ENCODE measurements at regions of chr16 and their contacts with region 1.

Region 1: GRCh38 chr16:85759631-85760419 is 8.9 kb upstream of the C16orf74 start:
- DNase-seq: no peak
- ATAC-seq: peak; percentile 62
- H3K4me3 ChIP-seq: no peak overlapping the region
- H3K27ac ChIP-seq: no peak overlapping the region
- H3K4me1 ChIP-seq: peaks cover 46% of the 10 kb centered on the region
- H3K27me3 ChIP-seq: no peaks in the 10 kb centered on the region
- CTCF ChIP-seq: peak; percentile 68 to 90 (median 83)
- EP300 ChIP-seq: no peak
- POLR2A ChIP-seq: no peak
- RAD21 ChIP-seq: peak; percentile 78

Region 2: DNA sequence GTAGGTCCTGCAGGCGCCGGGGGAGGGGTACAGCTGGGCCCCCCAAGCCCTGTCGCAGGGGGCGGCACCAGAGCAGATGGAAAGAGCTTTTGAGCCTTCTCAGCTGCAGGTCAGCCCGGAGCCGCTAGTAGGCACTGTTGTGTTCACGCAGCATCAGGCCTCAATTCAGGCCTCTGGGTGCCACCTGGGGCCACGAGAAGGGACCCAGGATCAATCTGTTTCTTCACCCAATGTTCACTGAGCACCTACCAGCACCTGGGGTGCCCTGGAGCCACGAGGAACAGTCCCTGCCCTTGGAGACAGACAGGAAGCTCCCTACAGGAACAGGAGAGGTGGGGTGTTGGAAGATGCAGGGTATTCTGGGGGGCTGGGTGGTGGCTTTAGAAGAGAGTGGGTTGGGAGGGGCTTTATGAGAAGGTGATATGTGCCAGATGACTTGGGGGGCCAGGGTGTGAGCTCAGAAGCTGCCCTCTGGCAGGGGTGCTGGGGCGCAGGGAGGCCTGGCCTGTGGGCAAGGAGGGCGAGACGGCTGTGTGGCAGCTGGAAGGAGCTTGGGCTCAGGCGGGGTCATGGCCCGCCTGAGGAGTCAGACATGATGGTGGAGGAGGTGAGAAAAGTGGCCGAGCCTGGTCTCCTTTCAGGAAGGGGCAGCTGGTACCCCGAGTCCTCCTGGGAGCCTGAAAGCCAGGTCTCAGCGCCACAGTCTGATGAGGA is 268.6 kb before region 1 on chr16:
- CTCF ChIA-PET with region 1: no interaction called
- POLR2A ChIA-PET with region 1: no interaction called
- RAD21 ChIA-PET with region 1: no interaction called
- SMC1A ChIA-PET with region 1: no interaction called
- in situ Hi-C with region 1: no loop called
- intact Hi-C with region 1: no loop called
- DNase-seq: no peak
- ATAC-seq: peak; percentile 86
- H3K4me3 ChIP-seq: no peak overlapping the region
- H3K27ac ChIP-seq: no peak overlapping the region
- H3K4me1 ChIP-seq: peaks cover 3% of the 10 kb centered on the region; the same call in 1 of the 2 replicates
- H3K27me3 ChIP-seq: peaks cover 0 to 2% of the 10 kb centered on the region in 2 experiments; a peak in 1 of 4 replicates
- CTCF ChIP-seq: peak; percentile 72 to 98 (median 98)
- EP300 ChIP-seq: no peak
- POLR2A ChIP-seq: no peak
- RAD21 ChIP-seq: peak; percentile 67

Region 3: DNA sequence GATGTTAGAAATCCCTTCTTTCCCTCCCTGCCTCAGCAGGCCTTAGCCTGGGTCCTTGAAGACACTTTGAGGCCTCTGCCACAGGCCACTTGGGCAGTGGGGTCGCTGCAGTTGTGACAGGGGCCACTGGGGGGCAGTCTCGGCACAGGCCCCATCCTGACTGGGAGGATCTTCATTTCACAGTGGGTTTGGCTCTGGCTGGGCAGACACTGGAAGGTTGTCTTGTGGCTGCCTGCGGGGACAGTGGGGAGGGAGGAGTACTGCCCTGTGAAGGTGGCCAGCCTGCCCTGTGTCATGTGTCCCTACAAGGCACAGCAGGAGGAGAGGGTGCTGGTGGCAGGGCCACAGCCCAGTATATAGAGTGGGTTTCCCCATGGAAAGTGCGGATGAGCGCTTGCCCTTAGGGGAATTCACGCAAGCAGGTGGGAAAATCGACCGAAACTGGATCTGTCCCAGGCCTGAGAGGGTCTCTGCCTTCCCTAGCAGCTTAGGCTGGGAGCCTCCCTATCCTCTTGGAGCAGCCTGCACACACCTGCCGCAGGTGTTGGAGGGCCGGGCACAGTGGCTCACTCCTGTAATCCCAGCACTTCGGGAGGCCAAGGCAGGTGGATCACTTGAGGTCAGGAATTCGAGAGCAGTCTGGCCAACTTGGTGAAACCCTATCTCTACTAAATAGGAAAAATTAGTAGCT is 99.9 kb before region 1 on chr16:
- CTCF ChIA-PET with region 1: interaction called, 4 read pairs
- POLR2A ChIA-PET with region 1: no interaction called
- RAD21 ChIA-PET with region 1: no interaction called
- SMC1A ChIA-PET with region 1: no interaction called
- in situ Hi-C with region 1: no loop called
- intact Hi-C with region 1: loop called (anchors 2 kb)
- DNase-seq: no peak
- ATAC-seq: peak; percentile 94
- H3K4me3 ChIP-seq: no peak overlapping the region
- H3K27ac ChIP-seq: no peak overlapping the region
- H3K4me1 ChIP-seq: no peaks in the 10 kb centered on the region
- H3K27me3 ChIP-seq: no peaks in the 10 kb centered on the region
- CTCF ChIP-seq: peak; percentile 87 to 96 (median 95)
- EP300 ChIP-seq: no peak
- POLR2A ChIP-seq: no peak; the same call in 1 of the 2 replicates
- RAD21 ChIP-seq: peak; percentile 80

Region 4: DNA sequence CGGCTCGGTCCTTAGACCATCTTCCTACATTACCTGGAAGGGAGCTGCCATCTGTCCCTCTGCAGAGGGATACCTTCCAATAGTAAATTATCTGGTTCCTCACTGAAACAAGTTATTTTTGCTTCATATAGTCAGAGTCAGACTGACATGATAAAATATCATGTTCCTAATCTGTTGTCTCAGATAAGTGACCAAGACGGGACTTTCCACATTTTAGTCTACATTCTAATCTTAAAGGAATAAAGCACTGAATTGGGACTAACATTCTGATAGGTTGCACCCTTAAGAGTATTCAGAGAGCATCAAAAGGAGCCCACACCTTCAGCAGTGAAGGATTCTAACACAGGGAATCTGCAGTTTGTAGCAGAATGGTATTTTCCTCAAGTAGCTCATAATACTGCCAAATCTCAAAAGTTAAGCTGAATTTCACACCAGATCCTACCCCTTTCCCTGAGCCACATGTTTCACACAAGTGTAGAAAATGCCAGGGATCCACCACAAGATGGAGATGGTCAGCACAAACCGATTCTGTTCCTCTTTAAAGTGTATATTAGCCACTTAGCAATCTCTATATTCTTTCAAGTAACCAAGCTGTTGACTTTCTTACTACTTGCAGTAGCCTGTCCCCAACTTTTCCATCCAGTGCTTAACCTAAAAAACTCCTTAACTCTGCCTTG is 84.4 kb before region 1 on chr16:
- CTCF ChIA-PET with region 1: interaction called, 5 read pairs
- POLR2A ChIA-PET with region 1: no interaction called
- RAD21 ChIA-PET with region 1: no interaction called
- SMC1A ChIA-PET with region 1: interaction called, 11 read pairs
- in situ Hi-C with region 1: no loop called
- intact Hi-C with region 1: no loop called
- DNase-seq: no peak
- ATAC-seq: peak; percentile 43
- H3K4me3 ChIP-seq: no peak overlapping the region
- H3K27ac ChIP-seq: peak overlapping the region; percentile 28; the same call in 1 of the 2 replicates
- H3K4me1 ChIP-seq: peaks cover 16% of the 10 kb centered on the region
- H3K27me3 ChIP-seq: no peaks in the 10 kb centered on the region
- CTCF ChIP-seq: peak; percentile 23 to 43 (median 35); a peak in 3 of 6 replicates
- EP300 ChIP-seq: no peak
- POLR2A ChIP-seq: no peak
- RAD21 ChIP-seq: 0 out of 2 replicates have a peak, but pooled peaks have one; percentile 16

Region 5: DNA sequence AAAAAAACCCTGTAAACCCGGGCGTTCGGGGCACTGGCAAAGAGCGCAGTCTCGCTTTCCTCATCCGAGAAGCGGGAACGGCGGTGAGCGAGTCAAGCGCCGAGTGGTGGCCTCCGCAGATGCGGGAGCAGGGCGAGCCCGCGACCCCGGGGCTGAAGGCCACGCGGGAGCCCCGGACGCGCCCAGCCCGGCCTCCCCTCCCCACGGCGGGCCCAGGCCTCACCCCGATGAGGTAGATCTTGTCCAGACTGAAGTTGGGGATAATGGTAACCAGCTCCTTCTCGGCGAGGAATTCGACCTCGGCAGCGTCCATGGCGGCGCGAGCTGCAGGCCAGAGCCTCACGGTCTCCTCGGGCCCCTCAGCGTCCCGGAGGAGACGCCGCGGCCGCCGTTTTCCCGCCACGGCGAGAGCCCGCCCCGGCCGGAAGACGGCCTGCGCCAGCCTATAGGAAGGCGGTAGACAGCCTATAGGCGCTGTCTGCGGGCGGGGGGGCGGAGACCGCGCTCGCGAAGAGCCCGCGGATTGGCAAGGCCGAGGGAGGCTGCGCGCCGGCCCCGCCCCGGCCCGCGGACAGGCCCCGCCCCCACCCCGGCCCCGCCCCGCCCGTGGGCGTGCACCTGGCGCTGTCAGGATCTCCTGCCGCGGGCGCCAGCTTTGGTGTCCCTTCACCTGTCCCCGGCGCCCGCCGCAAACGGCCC is 71.1 kb before region 1 on chr16 and contains the start of gene GINS2:
- CTCF ChIA-PET with region 1: interaction called, 4 read pairs
- POLR2A ChIA-PET with region 1: no interaction called
- RAD21 ChIA-PET with region 1: no interaction called
- SMC1A ChIA-PET with region 1: interaction called, 5 read pairs
- in situ Hi-C with region 1: no loop called
- intact Hi-C with region 1: loop called (anchors 5 kb)
- DNase-seq: peak; percentile 44
- ATAC-seq: peak; percentile 96
- H3K4me3 ChIP-seq: peak within 1 kb of the TSS; percentile 81
- H3K27ac ChIP-seq: peak within 1 kb of the TSS; percentile 69
- H3K4me1 ChIP-seq: peaks cover 23% of the 10 kb centered on the region
- H3K27me3 ChIP-seq: no peaks in the 10 kb centered on the region
- CTCF ChIP-seq: no peak
- EP300 ChIP-seq: no peak
- POLR2A ChIP-seq: peak; percentile 84
- RAD21 ChIP-seq: no peak
- polyA plus RNA-seq, gene GINS2: 69.4 to 90.8 TPM

Region 6: GRCh38 chr16:85717393-85718121 is 42.3 kb before region 1 on chr16:
- CTCF ChIA-PET with region 1: interaction called, 29 read pairs
- POLR2A ChIA-PET with region 1: no interaction called
- RAD21 ChIA-PET with region 1: interaction called, 3 read pairs
- SMC1A ChIA-PET with region 1: interaction called, 4 read pairs
- in situ Hi-C with region 1: no loop called
- intact Hi-C with region 1: loop called (anchors 5 kb)
- DNase-seq: no peak
- ATAC-seq: peak; percentile 78
- H3K4me3 ChIP-seq: no peak overlapping the region
- H3K27ac ChIP-seq: no peak overlapping the region
- H3K4me1 ChIP-seq: no peaks in the 10 kb centered on the region
- H3K27me3 ChIP-seq: no peaks in the 10 kb centered on the region
- CTCF ChIP-seq: peak; percentile 57 to 65 (median 64)
- EP300 ChIP-seq: no peak
- POLR2A ChIP-seq: no peak
- RAD21 ChIP-seq: peak; percentile 77

Region 7: DNA sequence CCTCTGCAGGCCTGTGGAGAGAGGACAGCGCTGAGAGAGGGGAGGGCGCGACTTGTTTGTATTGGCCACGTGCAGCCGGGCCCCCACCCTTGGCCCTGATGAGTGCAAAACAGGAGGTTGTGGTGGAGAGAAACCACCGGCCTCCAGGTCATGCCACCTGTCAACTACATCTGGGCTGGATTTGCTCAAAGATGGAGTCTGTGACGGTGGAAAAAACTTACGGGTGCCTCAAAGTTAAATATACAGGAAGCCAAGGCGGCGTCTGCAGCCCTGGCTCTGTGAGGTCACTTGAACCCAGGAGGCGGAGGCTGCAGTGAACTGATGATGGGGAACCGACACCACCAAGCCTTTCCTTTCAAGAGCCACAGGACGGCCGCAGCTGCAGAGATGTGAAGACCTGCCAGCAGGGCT is 24.6 kb before region 1 on chr16:
- CTCF ChIA-PET with region 1: interaction called, 9 read pairs
- POLR2A ChIA-PET with region 1: interaction called, 3 read pairs
- RAD21 ChIA-PET with region 1: interaction called, 4 read pairs
- SMC1A ChIA-PET with region 1: interaction called, 3 read pairs
- in situ Hi-C with region 1: no loop called
- intact Hi-C with region 1: loop called (anchors 2 kb)
- DNase-seq: peak; percentile 43
- ATAC-seq: peak; percentile 95
- H3K4me3 ChIP-seq: no peak overlapping the region; the same call in 1 of the 2 replicates
- H3K27ac ChIP-seq: no peak overlapping the region
- H3K4me1 ChIP-seq: peaks cover 15% of the 10 kb centered on the region
- H3K27me3 ChIP-seq: no peaks in the 10 kb centered on the region
- CTCF ChIP-seq: no peak
- EP300 ChIP-seq: no peak
- POLR2A ChIP-seq: no peak
- RAD21 ChIP-seq: no peak

Region 8: GRCh38 chr16:85777583-85778298 is 17.9 kb after region 1 on chr16:
- CTCF ChIA-PET with region 1: no interaction called
- POLR2A ChIA-PET with region 1: no interaction called
- RAD21 ChIA-PET with region 1: no interaction called
- SMC1A ChIA-PET with region 1: no interaction called
- in situ Hi-C with region 1: no loop called
- intact Hi-C with region 1: no loop called
- DNase-seq: no peak
- ATAC-seq: no peak
- H3K4me3 ChIP-seq: no peak overlapping the region
- H3K27ac ChIP-seq: no peak overlapping the region
- H3K4me1 ChIP-seq: no peaks in the 10 kb centered on the region
- H3K27me3 ChIP-seq: no peaks in the 10 kb centered on the region
- CTCF ChIP-seq: no peak
- EP300 ChIP-seq: no peak
- POLR2A ChIP-seq: no peak
- RAD21 ChIP-seq: no peak

Region 9: GRCh38 chr16:85799497-85800337 is 39.9 kb after region 1 on chr16 and contains the starts of genes COX4I1 and EMC8:
- CTCF ChIA-PET with region 1: no interaction called
- POLR2A ChIA-PET with region 1: interaction called, 3 read pairs
- RAD21 ChIA-PET with region 1: no interaction called
- SMC1A ChIA-PET with region 1: no interaction called
- in situ Hi-C with region 1: no loop called
- intact Hi-C with region 1: loop called (anchors 2 kb)
- DNase-seq: peak; percentile 63
- ATAC-seq: peak; percentile 95
- H3K4me3 ChIP-seq: peak within 1 kb of the TSS; percentile 95
- H3K27ac ChIP-seq: peak within 1 kb of the TSS; percentile 94
- H3K4me1 ChIP-seq: peaks cover 11% of the 10 kb centered on the region
- H3K27me3 ChIP-seq: no peaks in the 10 kb centered on the region
- CTCF ChIP-seq: no peak
- EP300 ChIP-seq: peak in 1 of 2 experiments; percentile 41; a peak in 1 of 4 replicates
- POLR2A ChIP-seq: peak; percentile 98
- RAD21 ChIP-seq: no peak
- polyA plus RNA-seq, gene COX4I1: 1,747 to 1,889 TPM
- polyA plus RNA-seq, gene EMC8: 7.8 to 16.5 TPM

Region 10: DNA sequence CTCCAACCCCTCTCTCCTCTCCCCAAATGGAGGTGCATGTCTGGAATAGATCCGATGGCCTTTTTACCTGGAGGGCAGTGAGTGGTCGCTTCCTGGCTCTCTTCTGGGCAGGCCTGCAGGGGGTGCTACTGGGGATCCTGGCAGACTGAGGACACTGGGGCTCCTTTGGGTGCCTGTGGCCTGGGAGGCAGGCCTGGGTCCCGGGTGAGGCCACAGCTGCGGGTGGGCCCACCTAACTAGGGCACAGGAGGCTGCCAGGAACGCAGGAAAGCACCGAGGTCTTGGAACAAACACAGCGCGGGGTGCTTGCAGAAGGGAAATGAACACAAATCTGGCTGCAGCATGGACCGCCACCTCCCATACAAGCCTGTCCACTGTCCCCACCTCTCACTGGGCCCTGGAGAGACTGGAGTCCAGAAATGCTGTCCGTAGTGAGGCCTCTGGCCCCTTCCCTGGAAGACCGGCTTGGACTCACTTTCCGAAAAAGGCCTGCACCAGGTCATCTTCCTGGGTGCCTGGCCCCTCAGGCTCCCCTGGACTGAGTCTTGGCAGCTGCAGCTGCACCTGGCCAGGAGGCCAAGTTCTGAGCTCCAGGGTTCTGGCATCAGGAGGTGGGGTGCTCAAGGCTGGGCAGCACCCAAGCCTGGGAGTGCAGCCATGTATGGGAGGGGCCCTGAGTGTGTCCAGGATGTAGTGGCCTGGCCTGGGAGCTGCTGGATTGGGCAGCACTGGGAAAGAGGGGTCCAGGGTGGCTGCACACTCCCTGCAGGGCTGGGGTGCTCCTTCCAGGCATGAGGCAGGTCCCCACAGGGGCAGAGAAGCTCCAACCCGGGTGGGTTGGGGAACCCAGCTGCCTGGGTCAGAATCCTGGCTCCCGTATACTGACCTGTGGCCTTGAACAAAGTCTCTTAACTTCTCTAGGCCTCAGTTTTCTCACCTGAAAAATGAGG is 334.3 kb after region 1 on chr16:
- CTCF ChIA-PET with region 1: no interaction called
- POLR2A ChIA-PET with region 1: no interaction called
- RAD21 ChIA-PET with region 1: no interaction called
- SMC1A ChIA-PET with region 1: no interaction called
- in situ Hi-C with region 1: no loop called
- intact Hi-C with region 1: no loop called
- DNase-seq: no peak
- ATAC-seq: no peak
- H3K4me3 ChIP-seq: no peak overlapping the region
- H3K27ac ChIP-seq: no peak overlapping the region
- H3K4me1 ChIP-seq: peaks cover 8% of the 10 kb centered on the region; the same call in 1 of the 2 replicates
- H3K27me3 ChIP-seq: no peaks in the 10 kb centered on the region; a peak in 1 of 4 replicates
- CTCF ChIP-seq: 0 out of 6 replicates have a peak, but pooled peaks of 2 of the 3 experiments have one; percentile 3 to 10
- EP300 ChIP-seq: no peak
- POLR2A ChIP-seq: no peak
- RAD21 ChIP-seq: no peak

Region 11: DNA sequence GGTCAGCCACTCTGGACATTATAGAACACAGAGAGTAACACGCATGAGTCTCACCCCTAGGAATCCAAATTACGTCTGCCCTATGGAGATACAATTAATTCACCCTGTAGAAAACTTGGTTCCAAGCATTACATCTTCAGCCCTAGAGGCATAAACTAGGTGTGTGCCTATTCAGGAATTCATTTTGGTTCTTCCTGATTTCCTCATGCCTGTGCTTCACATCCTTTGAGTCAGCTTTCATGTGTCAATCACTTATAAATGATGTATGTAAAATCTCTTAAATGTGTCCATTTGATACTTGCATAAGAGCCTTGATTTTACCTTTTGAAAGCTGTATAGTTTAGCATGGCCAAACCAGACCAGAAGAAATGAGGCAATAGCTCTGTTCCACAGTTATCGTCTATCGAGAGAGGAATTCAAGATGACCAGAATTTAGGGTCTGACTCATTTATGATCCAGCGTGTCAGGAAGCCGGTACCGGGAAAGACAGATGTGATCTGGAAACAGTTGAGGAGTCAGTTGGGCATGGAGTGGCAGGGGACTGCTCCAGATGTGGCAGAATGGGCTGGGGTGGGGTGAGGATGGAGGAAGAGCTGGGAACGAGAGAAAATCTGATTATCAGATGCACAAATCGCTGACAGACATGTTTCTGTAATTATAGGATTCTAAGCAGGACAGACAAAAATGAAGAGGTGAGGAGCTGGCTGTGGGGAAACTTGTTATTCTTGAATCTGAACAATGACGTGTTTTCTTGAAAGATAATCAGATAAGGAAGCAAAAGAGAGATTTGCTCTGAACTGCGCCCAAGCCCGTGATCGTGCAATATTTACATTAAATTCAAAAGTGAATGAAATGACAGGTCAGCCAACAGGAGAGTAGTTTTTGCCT is 1480.6 kb after region 1 on chr16:
- CTCF ChIA-PET with region 1: no interaction called
- POLR2A ChIA-PET with region 1: no interaction called
- RAD21 ChIA-PET with region 1: no interaction called
- SMC1A ChIA-PET with region 1: no interaction called
- in situ Hi-C with region 1: no loop called
- intact Hi-C with region 1: no loop called
- DNase-seq: no peak
- ATAC-seq: no peak
- H3K4me3 ChIP-seq: no peak overlapping the region
- H3K27ac ChIP-seq: no peak overlapping the region
- H3K4me1 ChIP-seq: peaks cover 7% of the 10 kb centered on the region
- H3K27me3 ChIP-seq: no peaks in the 10 kb centered on the region; a peak in 2 of 4 replicates
- CTCF ChIP-seq: no peak
- EP300 ChIP-seq: no peak
- POLR2A ChIP-seq: no peak
- RAD21 ChIP-seq: no peak